ENCODE measurements at regions of chr1 and their contacts with region 1.

Region 1: GRCh38 chr1:103106426-103107341 is 1.6 kb downstream of the COL11A1 start:
- DNase-seq: peak in 1 of 2 donors; percentile 28
- H3K4me3 ChIP-seq: peak overlapping the region; percentile 44 to 47
- H3K27ac ChIP-seq: no peak overlapping the region
- H3K4me1 ChIP-seq: peaks cover 0 to 27% (median 17%) of the 10 kb centered on the region in 4 donors
- H3K27me3 ChIP-seq: peaks cover 0 to 7% of the 10 kb centered on the region in 2 donors
- CTCF ChIP-seq: peak; percentile 45 to 46

Region 2: GRCh38 chr1:103180660-103181059 is 74.0 kb after region 1 on chr1:
- intact Hi-C with region 1: no loop called
- DNase-seq: no peak
- H3K4me3 ChIP-seq: no peak overlapping the region
- H3K27ac ChIP-seq: no peak overlapping the region
- H3K4me1 ChIP-seq: no peaks in the 10 kb centered on the region
- H3K27me3 ChIP-seq: no peaks in the 10 kb centered on the region
- CTCF ChIP-seq: no peak

Region 3: GRCh38 chr1:103514920-103515503 is 408.3 kb after region 1 on chr1:
- intact Hi-C with region 1: loop called (anchors 5 kb)
- DNase-seq: no peak
- H3K4me3 ChIP-seq: no peak overlapping the region
- H3K27ac ChIP-seq: no peak overlapping the region
- H3K4me1 ChIP-seq: no peaks in the 10 kb centered on the region
- H3K27me3 ChIP-seq: no peaks in the 10 kb centered on the region
- CTCF ChIP-seq: peak; percentile 71 to 72